Endothelial cell of umbilical vein (primary cell): ENCODE measurements at regions of chr12 and their contacts with region 1.

Region 1: DNA sequence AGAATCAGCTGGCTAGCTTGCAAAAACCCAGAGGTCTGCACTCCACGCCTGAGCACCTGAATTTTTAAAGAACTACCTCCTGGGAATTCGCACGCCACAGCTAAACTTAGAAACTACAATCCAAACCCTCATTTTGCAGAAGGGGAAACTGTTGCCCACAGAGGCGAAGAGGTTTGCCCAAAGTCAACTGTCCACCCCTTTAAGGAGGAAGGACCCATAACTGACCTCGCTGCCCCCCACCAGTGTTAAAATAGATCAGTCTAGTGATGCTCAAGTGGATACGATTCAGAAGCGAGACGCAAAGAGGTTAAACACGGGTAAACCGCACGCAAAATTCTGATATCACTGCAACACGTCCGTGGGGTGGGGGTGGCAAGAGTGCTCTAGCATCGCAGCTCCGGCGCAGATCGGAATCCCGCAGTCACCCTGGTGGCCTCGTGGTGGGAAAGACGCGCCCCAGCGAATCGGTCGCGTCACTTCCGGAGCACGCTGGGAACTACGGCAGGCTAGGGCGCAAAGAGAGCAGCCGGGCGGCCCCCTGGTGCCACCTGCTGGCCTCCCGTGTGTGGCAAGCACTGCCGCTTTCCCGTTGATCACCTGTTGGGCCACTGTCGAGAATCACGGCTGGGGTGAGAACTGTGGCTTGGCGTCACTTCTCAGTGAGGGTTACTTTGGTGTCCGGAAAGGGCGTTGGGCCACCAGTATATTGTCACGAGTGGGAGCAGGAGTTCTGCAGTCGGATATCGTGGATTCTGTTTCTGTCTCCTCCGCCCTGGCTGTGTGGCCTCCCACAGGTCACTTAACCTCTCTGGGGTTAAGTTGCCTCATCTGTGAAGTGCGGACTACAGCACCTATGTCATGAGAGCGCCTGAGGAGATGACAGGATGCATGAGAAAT is at the start of gene ALKBH2:
- DNase-seq: peak; percentile 89
- H3K4me3 ChIP-seq: peak within 1 kb of the TSS in 2 of 3 experiments; percentile 33 to 41
- H3K27ac ChIP-seq: peak within 1 kb of the TSS; percentile 43
- H3K4me1 ChIP-seq: peaks cover 7% of the 10 kb centered on the region
- H3K27me3 ChIP-seq: no peaks in the 10 kb centered on the region
- CTCF ChIP-seq: peak; percentile 99 to 100
- POLR2A ChIP-seq: peak; percentile 67
- total RNA-seq, gene ALKBH2: 5.4 TPM in 2 replicates

Region 2: GRCh38 chr12:108611884-108612415 is 481.3 kb before region 1 on chr12:
- CTCF ChIA-PET with region 1: no interaction called
- POLR2A ChIA-PET with region 1: no interaction called
- dilution Hi-C with region 1: no loop called
- intact Hi-C with region 1: loop called (anchors 1 kb)
- DNase-seq: peak; percentile 58
- H3K4me3 ChIP-seq: no peak overlapping the region
- H3K27ac ChIP-seq: no peak overlapping the region
- H3K4me1 ChIP-seq: peaks cover under 1% of the 10 kb centered on the region
- H3K27me3 ChIP-seq: no peaks in the 10 kb centered on the region
- CTCF ChIP-seq: peak; percentile 58 to 61
- POLR2A ChIP-seq: no peak

Region 3: GRCh38 chr12:108731105-108731865 is 362.0 kb before region 1 on chr12 and contains the start of gene CORO1C:
- CTCF ChIA-PET with region 1: no interaction called
- POLR2A ChIA-PET with region 1: no interaction called
- dilution Hi-C with region 1: no loop called
- intact Hi-C with region 1: loop called (anchors 5 kb)
- DNase-seq: peak; percentile 99
- H3K4me3 ChIP-seq: peak within 1 kb of the TSS; percentile 57 to 91 (median 76)
- H3K27ac ChIP-seq: peak within 1 kb of the TSS; percentile 92
- H3K4me1 ChIP-seq: peaks cover 29% of the 10 kb centered on the region
- H3K27me3 ChIP-seq: no peaks in the 10 kb centered on the region
- CTCF ChIP-seq: peak; percentile 89 to 95
- POLR2A ChIP-seq: peak; percentile 93
- total RNA-seq, gene CORO1C: 212 and 240 TPM in 2 replicates

Region 4: GRCh38 chr12:108884116-108885012 is 208.9 kb before region 1 on chr12:
- CTCF ChIA-PET with region 1: interaction called, 3 read pairs
- POLR2A ChIA-PET with region 1: no interaction called
- dilution Hi-C with region 1: no loop called
- intact Hi-C with region 1: loop called (anchors 1 kb)
- DNase-seq: peak; percentile 28
- H3K4me3 ChIP-seq: no peak overlapping the region
- H3K27ac ChIP-seq: no peak overlapping the region
- H3K4me1 ChIP-seq: no peaks in the 10 kb centered on the region
- H3K27me3 ChIP-seq: no peaks in the 10 kb centered on the region
- CTCF ChIP-seq: peak; percentile 60 to 78
- POLR2A ChIP-seq: no peak

Region 5: GRCh38 chr12:108950991-108951739 is 142.1 kb before region 1 on chr12:
- CTCF ChIA-PET with region 1: interaction called, 3 read pairs
- POLR2A ChIA-PET with region 1: no interaction called
- dilution Hi-C with region 1: no loop called
- intact Hi-C with region 1: loop called (anchors 1 kb)
- DNase-seq: peak; percentile 80
- H3K4me3 ChIP-seq: no peak overlapping the region
- H3K27ac ChIP-seq: no peak overlapping the region
- H3K4me1 ChIP-seq: no peaks in the 10 kb centered on the region
- H3K27me3 ChIP-seq: no peaks in the 10 kb centered on the region
- CTCF ChIP-seq: peak; percentile 74 to 80
- POLR2A ChIP-seq: no peak

Region 6: GRCh38 chr12:109052414-109053323 is 40.6 kb before region 1 on chr12 and contains the start of gene USP30:
- CTCF ChIA-PET with region 1: interaction called, 3 read pairs
- POLR2A ChIA-PET with region 1: no interaction called
- dilution Hi-C with region 1: no loop called
- intact Hi-C with region 1: loop called (anchors 1 kb)
- DNase-seq: peak; percentile 77
- H3K4me3 ChIP-seq: peak within 1 kb of the TSS; percentile 72 to 93 (median 88)
- H3K27ac ChIP-seq: peak within 1 kb of the TSS; percentile 22
- H3K4me1 ChIP-seq: peaks cover 10% of the 10 kb centered on the region
- H3K27me3 ChIP-seq: no peaks in the 10 kb centered on the region
- CTCF ChIP-seq: no peak
- POLR2A ChIP-seq: peak; percentile 1
- total RNA-seq, gene USP30: 12.9 and 14.2 TPM in 2 replicates

Region 7: DNA sequence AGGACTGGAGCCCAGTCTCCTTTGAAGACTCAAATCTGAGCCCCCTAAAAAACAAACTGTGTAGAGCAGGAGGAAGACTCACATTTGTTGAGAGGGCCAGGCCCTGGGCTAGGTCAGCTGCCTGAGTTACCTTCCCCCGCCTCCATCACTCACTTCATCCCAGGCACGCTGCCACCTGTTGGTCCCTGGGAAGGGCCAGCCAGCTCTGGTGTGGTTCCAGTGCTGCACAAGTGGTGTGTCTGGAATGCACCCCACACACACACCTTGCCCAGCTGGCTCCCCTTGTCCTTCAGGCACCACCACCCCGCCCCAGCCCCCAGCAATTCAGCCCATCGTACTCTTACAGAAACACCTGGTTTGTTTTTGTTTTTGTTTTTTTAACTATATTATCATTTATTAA is 489.4 kb after region 1 on chr12:
- CTCF ChIA-PET with region 1: no interaction called
- POLR2A ChIA-PET with region 1: no interaction called
- dilution Hi-C with region 1: no loop called
- intact Hi-C with region 1: no loop called
- DNase-seq: no peak
- H3K4me3 ChIP-seq: no peak overlapping the region
- H3K27ac ChIP-seq: no peak overlapping the region
- H3K4me1 ChIP-seq: no peaks in the 10 kb centered on the region
- H3K27me3 ChIP-seq: no peaks in the 10 kb centered on the region
- CTCF ChIP-seq: no peak
- POLR2A ChIP-seq: no peak